ENCODE measurements at regions of chr12 and their contacts with region 1.

Region 1: GRCh38 chr12:75859868-75860267 is 171.7 kb downstream of the PHLDA1 start:
- DNase-seq: no peak
- H3K4me3 ChIP-seq: no peak overlapping the region
- H3K27ac ChIP-seq: no peak overlapping the region
- H3K4me1 ChIP-seq: no peaks in the 10 kb centered on the region
- CTCF ChIP-seq: no peak

Region 2: DNA sequence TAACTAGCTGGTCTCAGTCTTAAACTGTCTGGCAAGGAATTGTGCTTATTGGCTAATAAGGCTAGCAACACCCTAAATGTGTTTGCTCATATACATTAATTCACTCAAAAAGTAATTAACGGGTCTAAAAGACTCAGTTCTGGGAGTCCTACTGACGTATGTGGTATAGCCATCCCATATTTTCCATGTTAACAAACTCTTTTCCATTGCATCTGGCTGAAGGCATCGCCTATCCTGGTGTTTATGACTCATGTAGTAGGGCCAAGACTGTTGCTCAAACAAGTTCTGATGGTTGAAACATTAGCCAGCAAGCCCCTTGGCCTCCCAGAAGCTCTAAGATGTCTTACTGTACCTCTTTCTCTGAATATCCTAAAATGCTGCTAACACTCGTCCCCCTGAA is 73.2 kb after region 1 on chr12:
- CTCF ChIA-PET with region 1: no interaction called
- POLR2A ChIA-PET with region 1: interaction called, 11 read pairs
- intact Hi-C with region 1: no loop called
- DNase-seq: no peak
- H3K4me3 ChIP-seq: no peak overlapping the region
- H3K27ac ChIP-seq: no peak overlapping the region
- H3K4me1 ChIP-seq: no peaks in the 10 kb centered on the region
- CTCF ChIP-seq: no peak

Measured in OCI-LY7 (cell line).